GM18951 (cell line): ENCODE measurements at regions of chr3 and their contacts with region 1.

Region 1: DNA sequence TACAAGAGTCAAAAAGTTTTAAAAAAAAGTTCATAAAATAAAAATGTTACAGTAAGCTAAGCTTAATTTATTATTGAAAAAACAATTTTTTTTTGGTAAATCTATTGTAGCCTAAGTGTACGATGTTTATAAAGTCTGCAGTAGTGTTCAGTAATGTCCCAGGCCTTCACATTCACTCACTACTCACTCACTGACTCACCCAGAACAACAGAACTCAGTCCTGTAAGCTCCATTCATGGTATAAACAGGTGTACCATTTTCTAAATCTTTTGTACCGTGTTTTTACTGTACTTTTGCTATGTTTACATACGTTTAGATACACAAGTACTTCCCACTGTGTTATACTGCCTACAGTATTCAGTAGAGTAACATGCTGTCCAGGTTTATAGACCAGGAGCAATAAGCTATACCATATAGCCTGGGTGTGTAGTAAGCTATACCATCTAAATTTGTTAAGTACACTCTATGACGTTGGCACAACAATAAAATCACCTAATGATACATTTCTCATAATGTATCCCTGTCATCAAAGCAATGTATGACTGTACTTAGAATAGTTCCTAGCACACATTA is 41.2 kb upstream of the ZDHHC23 start:
- POLR2A ChIP-seq: no peak

Region 2: DNA sequence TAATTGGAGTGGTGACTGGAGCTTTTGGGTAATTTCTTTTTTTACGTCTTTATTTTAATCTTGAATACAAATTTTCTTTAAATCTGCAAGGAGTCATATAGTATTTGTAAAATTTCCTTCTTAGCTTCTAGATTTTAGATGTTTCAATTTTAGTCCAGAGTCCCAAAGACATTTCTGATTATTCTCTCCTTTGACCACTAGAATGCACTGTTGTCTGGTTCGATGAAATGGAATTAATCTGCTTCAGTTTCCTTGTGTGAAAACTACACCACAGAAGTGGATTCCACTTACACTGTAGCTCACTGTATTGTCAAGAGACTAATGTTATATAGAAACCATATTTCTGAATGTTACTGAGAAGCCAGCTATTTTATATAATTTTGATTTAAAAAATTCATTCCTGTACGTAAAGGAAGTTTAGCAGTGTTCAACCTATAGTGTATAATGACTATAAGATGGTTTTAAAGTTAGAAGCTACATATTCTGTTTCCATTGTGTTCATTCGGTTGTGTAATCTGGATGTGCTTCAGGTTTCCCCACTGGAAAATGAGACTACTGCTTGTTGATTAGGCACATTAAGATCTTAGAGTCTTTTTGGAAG is 61.9 kb before region 1 on chr3:
- in situ Hi-C with region 1: loop called (anchors 5 kb)
- POLR2A ChIP-seq: no peak

Region 3: GRCh38 chr3:114025451-114025850 is 118.8 kb after region 1 on chr3:
- in situ Hi-C with region 1: no loop called
- POLR2A ChIP-seq: no peak

Region 4: DNA sequence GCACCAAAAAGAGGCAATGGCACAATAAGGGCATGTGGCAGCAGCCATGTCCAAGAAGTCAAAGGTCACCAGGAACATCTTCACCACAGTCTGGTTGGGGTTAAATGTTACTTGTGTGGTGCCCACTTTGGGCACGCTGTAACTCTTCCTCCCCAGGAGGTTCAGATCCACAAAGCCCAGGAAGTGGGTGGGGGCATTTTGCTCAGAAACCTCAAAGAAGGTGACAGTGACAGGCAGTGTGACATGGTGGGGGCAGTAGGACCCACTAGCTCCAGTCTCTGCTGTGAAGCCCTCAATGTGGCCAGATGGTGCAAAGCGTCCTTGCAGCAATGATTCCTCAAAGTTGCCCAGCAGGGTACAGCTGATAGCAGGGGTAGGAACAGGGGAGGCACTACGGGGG is 325.0 kb after region 1 on chr3:
- in situ Hi-C with region 1: no loop called
- POLR2A ChIP-seq: no peak